ENCODE measurements at regions of chr1 and their contacts with region 1.

Region 1: GRCh38 chr1:176149939-176150807 is 56.9 kb downstream of the COP1 start:
- DNase-seq: no peak
- ATAC-seq: no peak
- H3K4me3 ChIP-seq: no peak overlapping the region
- H3K27ac ChIP-seq: no peak overlapping the region
- H3K4me1 ChIP-seq: no peaks in the 10 kb centered on the region
- H3K27me3 ChIP-seq: no peaks in the 10 kb centered on the region
- CTCF ChIP-seq: no peak

Region 2: DNA sequence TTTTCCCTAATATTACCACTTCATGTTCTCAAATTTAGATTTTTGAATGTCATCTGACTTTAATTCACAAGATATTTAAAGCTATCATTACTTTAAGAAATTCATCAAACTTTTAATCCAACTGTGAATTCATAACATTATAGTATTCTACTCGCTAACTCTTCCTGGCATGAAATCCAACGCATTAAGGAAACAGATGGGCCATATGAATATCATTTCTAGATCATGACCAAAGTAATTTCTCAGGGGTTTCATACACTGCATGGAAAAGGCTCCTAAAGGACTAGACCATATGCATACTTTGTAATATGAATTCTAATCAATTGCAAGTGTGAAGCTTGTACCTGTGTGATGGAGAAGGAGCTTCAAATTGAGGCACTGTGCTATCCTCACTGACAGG is 15.5 kb before region 1 on chr1:
- CTCF ChIA-PET with region 1: no interaction called
- POLR2A ChIA-PET with region 1: no interaction called
- in situ Hi-C with region 1: no loop called
- intact Hi-C with region 1: loop called (anchors 1 kb)
- DNase-seq: no peak
- ATAC-seq: no peak
- H3K4me3 ChIP-seq: no peak overlapping the region
- H3K27ac ChIP-seq: no peak overlapping the region
- H3K4me1 ChIP-seq: no peaks in the 10 kb centered on the region
- H3K27me3 ChIP-seq: no peaks in the 10 kb centered on the region
- CTCF ChIP-seq: no peak

Measured in Panc1 (cell line).